HCT116 (cell line): ENCODE measurements at regions of chr3 and their contacts with region 1.

Region 1: GRCh38 chr3:14203521-14204079 is 25.0 kb downstream of the LSM3 start:
- DNase-seq: peak; percentile 40
- ATAC-seq: peak; percentile 80
- H3K4me3 ChIP-seq: no peak overlapping the region
- H3K27ac ChIP-seq: no peak overlapping the region
- H3K4me1 ChIP-seq: no peaks in the 10 kb centered on the region
- H3K27me3 ChIP-seq: no peaks in the 10 kb centered on the region
- CTCF ChIP-seq: peak; percentile 79 to 85 (median 83)
- POLR2A ChIP-seq: no peak
- RAD21 ChIP-seq: peak; percentile 89

Region 2: GRCh38 chr3:13895155-13896105 is 308.2 kb before region 1 on chr3:
- CTCF ChIA-PET with region 1: interaction called, 22 read pairs
- POLR2A ChIA-PET with region 1: no interaction called
- RAD21 ChIA-PET with region 1: no interaction called
- intact Hi-C with region 1: no loop called
- DNase-seq: peak; percentile 77
- ATAC-seq: peak; percentile 100
- H3K4me3 ChIP-seq: peak overlapping the region; percentile 32 to 39
- H3K27ac ChIP-seq: no peak overlapping the region
- H3K4me1 ChIP-seq: peaks cover 8 to 24% of the 10 kb centered on the region in 2 experiments; a peak in 3 of 4 replicates
- H3K27me3 ChIP-seq: no peaks in the 10 kb centered on the region
- CTCF ChIP-seq: no peak
- POLR2A ChIP-seq: no peak
- RAD21 ChIP-seq: no peak

Region 3: GRCh38 chr3:14188041-14188754 is 15.4 kb before region 1 on chr3:
- CTCF ChIA-PET with region 1: interaction called, 10 read pairs
- POLR2A ChIA-PET with region 1: interaction called, 3 read pairs
- RAD21 ChIA-PET with region 1: no interaction called
- intact Hi-C with region 1: no loop called
- DNase-seq: no peak
- ATAC-seq: no peak
- H3K4me3 ChIP-seq: no peak overlapping the region
- H3K27ac ChIP-seq: no peak overlapping the region
- H3K4me1 ChIP-seq: no peaks in the 10 kb centered on the region
- H3K27me3 ChIP-seq: no peaks in the 10 kb centered on the region
- CTCF ChIP-seq: no peak
- POLR2A ChIP-seq: no peak
- RAD21 ChIP-seq: no peak

Region 4: DNA sequence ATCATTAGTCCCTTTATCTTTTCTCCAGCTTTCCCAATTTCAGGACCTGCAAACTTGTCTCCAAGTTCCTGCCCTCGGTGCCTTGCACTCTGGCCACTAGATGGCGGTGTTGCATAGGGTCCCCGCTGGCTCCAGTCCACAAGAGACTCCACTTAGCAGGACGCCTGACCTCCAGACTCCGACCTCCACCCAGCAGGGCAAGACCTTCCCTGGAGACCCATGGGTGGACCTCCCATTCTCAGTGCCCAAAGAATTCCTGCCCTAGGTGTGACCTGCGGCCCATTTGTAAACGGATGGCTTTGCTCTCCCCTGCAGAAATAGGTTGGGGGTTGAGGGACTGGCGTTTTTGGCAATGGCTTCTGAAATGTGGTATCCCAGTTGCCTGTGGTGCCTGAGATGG is 57.6 kb after region 1 on chr3:
- CTCF ChIA-PET with region 1: interaction called, 15 read pairs
- POLR2A ChIA-PET with region 1: no interaction called
- RAD21 ChIA-PET with region 1: interaction called in 1 of 2 experiments, 5 read pairs
- intact Hi-C with region 1: no loop called
- DNase-seq: peak; percentile 68
- ATAC-seq: peak; percentile 90
- H3K4me3 ChIP-seq: no peak overlapping the region
- H3K27ac ChIP-seq: no peak overlapping the region
- H3K4me1 ChIP-seq: peaks cover 0 to 9% of the 10 kb centered on the region in 2 experiments; a peak in 1 of 4 replicates
- H3K27me3 ChIP-seq: peaks cover 6% of the 10 kb centered on the region; the same call in 1 of the 2 replicates
- CTCF ChIP-seq: peak; percentile 97 to 99 (median 97)
- POLR2A ChIP-seq: no peak
- RAD21 ChIP-seq: peak; percentile 98

Region 5: GRCh38 chr3:14461748-14462324 is 258.2 kb after region 1 on chr3:
- CTCF ChIA-PET with region 1: interaction called, 30 read pairs
- POLR2A ChIA-PET with region 1: no interaction called
- RAD21 ChIA-PET with region 1: interaction called in 1 of 2 experiments, 7 read pairs
- intact Hi-C with region 1: loop called (anchors 2 kb)
- DNase-seq: peak; percentile 32
- ATAC-seq: peak; percentile 89
- H3K4me3 ChIP-seq: no peak overlapping the region
- H3K27ac ChIP-seq: no peak overlapping the region
- H3K4me1 ChIP-seq: no peaks in the 10 kb centered on the region
- H3K27me3 ChIP-seq: no peaks in the 10 kb centered on the region
- CTCF ChIP-seq: peak; percentile 69 to 99 (median 81)
- POLR2A ChIP-seq: no peak
- RAD21 ChIP-seq: peak; percentile 96

Region 6: GRCh38 chr3:14548321-14548729 is 344.7 kb after region 1 on chr3:
- CTCF ChIA-PET with region 1: interaction called, 17 read pairs
- POLR2A ChIA-PET with region 1: no interaction called
- RAD21 ChIA-PET with region 1: no interaction called
- intact Hi-C with region 1: loop called (anchors 2 kb)
- DNase-seq: peak; percentile 39
- ATAC-seq: peak; percentile 96
- H3K4me3 ChIP-seq: no peak overlapping the region
- H3K27ac ChIP-seq: no peak overlapping the region
- H3K4me1 ChIP-seq: peaks cover 0 to 13% of the 10 kb centered on the region in 2 experiments; a peak in 2 of 4 replicates
- H3K27me3 ChIP-seq: no peaks in the 10 kb centered on the region
- CTCF ChIP-seq: peak; percentile 74 to 86 (median 78)
- POLR2A ChIP-seq: no peak
- RAD21 ChIP-seq: peak; percentile 85